ENCODE measurements at regions of chr14 and their contacts with region 1.

Region 1: GRCh38 chr14:95979339-95980042 is 59.7 kb upstream of the C14orf132 start:
- DNase-seq: no peak
- H3K4me3 ChIP-seq: no peak overlapping the region
- H3K27ac ChIP-seq: no peak overlapping the region
- H3K4me1 ChIP-seq: no peaks in the 10 kb centered on the region
- H3K27me3 ChIP-seq: no peaks in the 10 kb centered on the region
- CTCF ChIP-seq: no peak
- POLR2A ChIP-seq: no peak

Region 2: DNA sequence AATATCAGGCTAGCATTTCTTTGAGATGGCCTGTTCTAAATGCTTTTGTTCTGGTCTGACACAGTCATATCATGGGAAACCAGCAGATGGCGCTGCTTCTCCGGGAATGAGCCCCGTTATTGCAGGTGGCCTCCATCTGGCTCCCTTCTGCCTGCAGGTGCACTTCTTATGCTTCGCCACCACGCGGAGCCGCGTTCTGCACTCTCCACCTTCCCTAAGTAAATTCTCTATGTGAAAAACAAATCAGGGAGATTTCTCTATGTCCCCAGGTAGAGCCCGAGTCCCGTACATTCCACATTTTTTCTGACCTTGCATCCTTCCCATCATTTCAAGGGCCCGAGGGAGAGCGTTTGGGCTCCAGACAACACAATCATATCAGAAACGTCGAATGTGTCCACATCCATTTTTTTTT is 418.5 kb before region 1 on chr14:
- intact Hi-C with region 1: loop called (anchors 10 kb)
- DNase-seq: peak; percentile 96
- H3K4me3 ChIP-seq: no peak overlapping the region
- H3K27ac ChIP-seq: no peak overlapping the region
- H3K4me1 ChIP-seq: no peaks in the 10 kb centered on the region
- H3K27me3 ChIP-seq: no peaks in the 10 kb centered on the region
- CTCF ChIP-seq: peak; percentile 96 to 97 (median 96)
- POLR2A ChIP-seq: no peak

Region 3: GRCh38 chr14:96126339-96126782 is 146.9 kb after region 1 on chr14:
- intact Hi-C with region 1: no loop called
- DNase-seq: no peak
- H3K4me3 ChIP-seq: no peak overlapping the region
- H3K27ac ChIP-seq: no peak overlapping the region
- H3K4me1 ChIP-seq: peaks cover 1% of the 10 kb centered on the region
- H3K27me3 ChIP-seq: no peaks in the 10 kb centered on the region
- CTCF ChIP-seq: no peak
- POLR2A ChIP-seq: no peak